Heart left ventricle (tissue), 16 donors: ENCODE measurements at regions of chr2 and their contacts with region 1.

Region 1: GRCh38 chr2:218418717-218419458 is at the start of gene VIL1:
- DNase-seq: no peak
- ATAC-seq: peak in 1 of 4 donors; percentile 19
- H3K4me3 ChIP-seq: no peak within 1 kb of the TSS
- H3K27ac ChIP-seq: no peak within 1 kb of the TSS
- H3K4me1 ChIP-seq: no peaks in the 10 kb centered on the region
- H3K27me3 ChIP-seq: no peaks in the 10 kb centered on the region
- CTCF ChIP-seq: no peak
- POLR2A ChIP-seq: no peak
- total RNA-seq, gene VIL1: not detected

Region 2: DNA sequence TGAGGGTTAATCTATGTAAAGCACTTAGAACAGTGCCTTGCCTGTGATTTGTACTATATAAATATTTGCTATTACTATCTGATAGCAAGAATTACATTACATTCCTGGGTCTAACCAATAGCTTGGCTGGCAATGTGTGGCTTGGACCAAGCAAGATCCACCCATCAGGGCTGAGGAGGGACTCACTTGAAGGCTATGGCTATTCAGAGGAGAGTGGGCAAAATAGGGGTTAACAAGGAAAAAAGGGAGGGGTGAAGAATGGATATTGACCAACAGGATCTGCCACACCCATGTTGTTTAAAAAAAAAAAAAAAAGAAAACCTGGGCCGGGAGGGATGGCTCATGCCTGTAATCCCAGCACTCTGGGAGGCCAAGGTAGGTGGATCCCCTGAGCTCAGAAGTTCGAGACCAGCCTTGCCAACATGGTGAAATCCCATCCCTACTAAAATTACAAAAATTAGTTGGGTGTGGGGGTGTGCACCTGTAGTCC is 106.6 kb before region 1 on chr2:
- intact Hi-C with region 1: no loop called
- DNase-seq: no peak
- ATAC-seq: no peak
- H3K4me3 ChIP-seq: no peak overlapping the region
- H3K27ac ChIP-seq: no peak overlapping the region
- H3K4me1 ChIP-seq: peaks cover 0 to 23% (median 0%) of the 10 kb centered on the region in 12 donors
- H3K27me3 ChIP-seq: no peaks in the 10 kb centered on the region
- CTCF ChIP-seq: no peak
- POLR2A ChIP-seq: no peak

Region 3: DNA sequence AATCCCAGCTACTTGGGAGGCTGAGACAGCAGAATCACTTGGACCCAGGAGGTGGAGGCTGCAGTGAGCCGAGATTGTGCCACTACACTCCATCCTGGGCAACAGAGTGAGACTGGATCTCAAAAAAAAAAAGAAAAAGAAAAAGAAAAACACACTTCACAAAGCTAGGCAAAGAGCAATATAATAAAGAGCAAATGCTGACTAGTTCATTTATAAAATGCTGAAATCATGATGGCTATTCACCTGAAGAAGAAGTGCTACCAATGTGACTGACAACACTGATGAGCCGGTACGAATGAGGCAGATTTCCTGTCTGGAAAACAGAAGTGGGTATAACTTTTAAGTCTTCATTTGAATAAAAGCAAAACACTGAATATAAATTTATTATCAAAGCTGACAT is 38.0 kb after region 1 on chr2:
- intact Hi-C with region 1: loop called in 3 of 10 experiments (anchors 5 kb)
- DNase-seq: no peak
- ATAC-seq: no peak
- H3K4me3 ChIP-seq: no peak overlapping the region
- H3K27ac ChIP-seq: no peak overlapping the region
- H3K4me1 ChIP-seq: peaks cover 0 to 3% (median 0%) of the 10 kb centered on the region in 12 donors
- H3K27me3 ChIP-seq: no peaks in the 10 kb centered on the region
- CTCF ChIP-seq: no peak
- POLR2A ChIP-seq: no peak

Region 4: GRCh38 chr2:218466016-218466521 is 47.2 kb after region 1 on chr2:
- intact Hi-C with region 1: loop called in 2 of 10 experiments (anchors 5 kb)
- DNase-seq: no peak
- ATAC-seq: peak in 1 of 4 donors; percentile 26
- H3K4me3 ChIP-seq: no peak overlapping the region
- H3K27ac ChIP-seq: no peak overlapping the region
- H3K4me1 ChIP-seq: peaks cover 0 to 5% (median 1%) of the 10 kb centered on the region in 12 donors
- H3K27me3 ChIP-seq: no peaks in the 10 kb centered on the region
- CTCF ChIP-seq: peak; percentile 28 to 68 (median 50)
- POLR2A ChIP-seq: no peak